ENCODE measurements at regions of chr16 and their contacts with region 1.

Region 1: DNA sequence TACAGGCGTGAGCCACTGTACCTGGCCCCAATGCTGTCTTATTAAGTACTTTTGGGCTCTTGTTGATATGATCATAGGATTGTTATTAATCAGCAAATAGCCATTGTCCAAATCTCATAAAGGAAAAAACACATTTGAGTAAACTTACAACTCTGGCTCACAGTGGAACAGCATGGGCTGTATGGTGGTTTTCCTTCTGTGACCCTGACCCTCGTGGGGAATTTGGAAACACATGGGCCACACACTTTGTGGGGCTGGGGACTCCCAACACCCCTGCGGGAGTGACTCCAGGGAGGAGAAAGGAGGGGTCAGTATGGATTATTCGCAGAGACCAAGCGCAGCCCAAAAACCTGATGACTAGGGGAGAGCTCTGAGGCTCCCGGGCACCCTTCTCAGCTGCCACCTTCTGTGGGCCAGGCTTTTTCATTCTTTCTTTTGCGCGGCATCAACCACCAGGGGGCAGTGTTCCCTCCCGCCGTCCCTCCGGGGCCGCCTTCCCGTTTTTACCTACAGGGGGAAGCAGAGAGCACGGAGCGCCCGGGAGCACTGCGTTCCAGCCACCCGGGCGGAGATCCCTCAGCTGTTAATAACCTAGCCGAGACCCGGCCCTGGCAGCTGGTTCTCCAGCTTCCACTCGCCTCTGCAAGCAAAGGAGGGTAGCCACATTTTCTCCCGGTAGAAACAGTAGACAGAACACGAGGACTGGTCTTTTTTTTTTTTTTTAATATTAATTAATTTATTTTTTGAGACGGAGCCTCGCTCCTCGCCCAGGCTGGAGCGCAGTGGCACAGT is 9.7 kb downstream of the TSNAXIP1 start:
- DNase-seq: peak; percentile 70
- H3K4me3 ChIP-seq: no peak overlapping the region
- H3K27ac ChIP-seq: no peak overlapping the region
- H3K4me1 ChIP-seq: no peaks in the 10 kb centered on the region
- H3K27me3 ChIP-seq: no peaks in the 10 kb centered on the region
- CTCF ChIP-seq: peak; percentile 100
- POLR2A ChIP-seq: no peak

Region 2: DNA sequence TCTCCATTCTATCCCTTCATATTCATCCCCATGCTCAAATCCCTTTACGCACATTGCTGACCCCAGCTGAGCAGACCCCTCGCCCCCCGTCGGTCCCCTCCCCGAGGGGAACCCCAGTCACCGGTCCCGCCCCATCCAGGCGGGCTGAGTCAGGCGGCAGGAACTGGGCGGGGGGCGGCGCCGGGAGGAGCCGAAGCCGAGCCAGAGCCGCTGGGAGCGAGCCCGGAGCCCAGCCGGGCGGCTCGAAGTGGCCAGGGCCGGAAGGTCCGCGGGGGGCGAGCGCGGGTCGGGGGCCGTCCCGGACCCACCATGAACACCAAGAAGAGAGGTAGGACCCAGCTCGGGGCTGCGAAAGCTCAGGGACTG is 279.2 kb before region 1 on chr16:
- CTCF ChIA-PET with region 1: no interaction called
- POLR2A ChIA-PET with region 1: no interaction called
- dilution Hi-C with region 1: no loop called
- intact Hi-C with region 1: no loop called
- DNase-seq: peak; percentile 79
- H3K4me3 ChIP-seq: peak overlapping the region; percentile 73 to 89 (median 88)
- H3K27ac ChIP-seq: peak overlapping the region; percentile 93
- H3K4me1 ChIP-seq: peaks cover 24% of the 10 kb centered on the region
- H3K27me3 ChIP-seq: no peaks in the 10 kb centered on the region
- CTCF ChIP-seq: no peak
- POLR2A ChIP-seq: peak; percentile 80

Region 3: DNA sequence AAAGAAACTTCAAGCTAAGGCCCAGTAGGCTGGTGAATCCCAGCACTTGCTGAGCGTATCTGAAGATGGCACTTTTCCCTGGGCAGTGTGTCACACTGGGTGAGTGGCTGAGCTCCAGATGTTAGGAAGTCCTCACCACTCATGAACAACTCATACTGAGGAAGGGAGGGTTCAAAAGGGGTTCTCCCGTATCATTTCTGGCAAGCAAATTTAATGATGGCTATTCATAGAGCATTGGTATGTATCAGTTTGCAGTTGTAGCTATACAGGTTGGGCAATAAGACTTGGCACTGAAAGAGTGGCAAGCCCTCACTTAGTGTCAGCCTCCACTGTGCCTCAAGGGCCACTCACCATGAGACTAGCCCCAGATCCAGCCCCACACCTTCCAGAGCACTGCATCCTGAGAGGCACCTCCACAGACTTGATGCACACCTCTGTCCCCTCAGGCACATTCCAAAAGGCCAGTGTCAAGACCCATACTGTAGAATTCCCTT is 108.0 kb before region 1 on chr16:
- CTCF ChIA-PET with region 1: no interaction called
- POLR2A ChIA-PET with region 1: no interaction called
- dilution Hi-C with region 1: no loop called
- intact Hi-C with region 1: no loop called
- DNase-seq: no peak
- H3K4me3 ChIP-seq: no peak overlapping the region
- H3K27ac ChIP-seq: no peak overlapping the region
- H3K4me1 ChIP-seq: no peaks in the 10 kb centered on the region
- H3K27me3 ChIP-seq: no peaks in the 10 kb centered on the region
- CTCF ChIP-seq: no peak
- POLR2A ChIP-seq: no peak

Region 4: GRCh38 chr16:67719048-67719777 is 97.2 kb before region 1 on chr16 and contains the start of gene GFOD2:
- CTCF ChIA-PET with region 1: interaction called, 17 read pairs
- POLR2A ChIA-PET with region 1: interaction called, 8 read pairs
- dilution Hi-C with region 1: no loop called
- intact Hi-C with region 1: no loop called
- DNase-seq: peak; percentile 98
- H3K4me3 ChIP-seq: peak within 1 kb of the TSS; percentile 78 to 93 (median 91)
- H3K27ac ChIP-seq: peak within 1 kb of the TSS; percentile 81
- H3K4me1 ChIP-seq: peaks cover 23% of the 10 kb centered on the region
- H3K27me3 ChIP-seq: no peaks in the 10 kb centered on the region
- CTCF ChIP-seq: no peak
- POLR2A ChIP-seq: peak; percentile 97
- total RNA-seq, gene GFOD2: 43.7 and 47.5 TPM in 2 replicates

Region 5: GRCh38 chr16:67833418-67834241 is 17.2 kb after region 1 on chr16:
- CTCF ChIA-PET with region 1: interaction called, 35 read pairs
- POLR2A ChIA-PET with region 1: interaction called, 3 read pairs
- dilution Hi-C with region 1: no loop called
- intact Hi-C with region 1: no loop called
- DNase-seq: peak; percentile 94
- H3K4me3 ChIP-seq: peak overlapping the region; percentile 33 to 69 (median 68)
- H3K27ac ChIP-seq: peak overlapping the region; percentile 29
- H3K4me1 ChIP-seq: peaks cover 7% of the 10 kb centered on the region
- H3K27me3 ChIP-seq: no peaks in the 10 kb centered on the region
- CTCF ChIP-seq: no peak
- POLR2A ChIP-seq: peak; percentile 91

Region 6: DNA sequence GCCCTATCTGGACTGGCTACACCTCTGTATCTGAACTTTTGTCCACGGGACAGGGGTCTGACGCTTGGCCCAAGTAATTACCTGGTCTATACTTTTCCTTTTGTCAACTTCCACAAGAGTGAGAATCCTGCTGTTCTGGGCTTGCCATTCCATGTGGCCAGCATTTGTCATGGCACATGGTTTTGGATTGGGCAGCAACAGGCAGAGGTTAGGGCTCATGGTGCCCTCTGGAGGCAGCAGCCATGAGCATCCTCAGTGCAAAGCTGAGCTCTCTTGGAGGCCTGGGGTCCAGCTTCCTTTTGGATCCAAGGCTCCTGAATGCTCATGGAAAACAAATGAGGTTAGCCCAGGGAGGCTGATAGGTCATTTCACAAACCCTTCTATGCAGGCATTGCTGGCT is 48.9 kb after region 1 on chr16:
- CTCF ChIA-PET with region 1: interaction called, 64 read pairs
- POLR2A ChIA-PET with region 1: no interaction called
- dilution Hi-C with region 1: no loop called
- intact Hi-C with region 1: loop called (anchors 1 kb)
- DNase-seq: peak; percentile 40
- H3K4me3 ChIP-seq: no peak overlapping the region
- H3K27ac ChIP-seq: no peak overlapping the region
- H3K4me1 ChIP-seq: no peaks in the 10 kb centered on the region
- H3K27me3 ChIP-seq: no peaks in the 10 kb centered on the region
- CTCF ChIP-seq: peak; percentile 30 to 57
- POLR2A ChIP-seq: no peak

Region 7: DNA sequence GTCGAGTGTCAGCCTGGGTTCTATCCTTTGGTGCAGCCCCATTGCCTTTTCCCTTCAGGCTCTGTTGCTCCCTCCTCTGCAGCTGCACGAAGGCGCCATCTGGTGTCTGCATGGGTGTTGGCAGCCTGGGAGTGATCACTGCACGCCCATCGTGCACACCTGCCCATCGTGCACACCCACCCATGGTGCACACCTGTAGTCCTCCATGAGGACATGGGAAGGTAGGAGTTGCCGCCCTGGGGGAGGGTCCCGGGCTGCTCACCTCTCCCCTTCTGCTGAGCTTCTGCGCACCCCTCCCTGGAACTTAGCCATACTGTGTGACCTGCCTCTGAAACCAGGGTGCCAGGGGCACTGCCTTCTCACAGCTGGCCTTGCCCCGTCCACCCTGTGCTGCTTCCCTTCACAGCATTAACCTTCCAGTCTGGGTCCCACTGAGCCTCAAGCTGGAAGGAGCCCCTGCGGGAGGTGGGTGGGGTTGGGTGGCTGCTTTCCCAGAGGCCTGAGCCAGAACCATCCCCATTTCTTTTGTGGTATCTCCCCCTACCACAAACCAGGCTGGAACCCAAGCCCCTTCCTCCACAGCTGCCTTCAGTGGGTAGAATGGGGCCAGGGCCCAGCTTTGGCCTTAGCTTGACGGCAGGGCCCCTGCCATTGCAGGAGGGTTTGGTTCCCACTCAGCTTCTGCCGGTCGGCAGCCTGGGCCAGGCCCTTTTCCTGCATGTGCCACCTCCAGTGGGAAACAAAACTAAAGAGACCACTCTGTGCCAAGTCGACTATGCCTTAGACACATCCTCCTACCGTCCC is 112.3 kb after region 1 on chr16:
- CTCF ChIA-PET with region 1: interaction called, 51 read pairs
- POLR2A ChIA-PET with region 1: no interaction called
- dilution Hi-C with region 1: no loop called
- intact Hi-C with region 1: loop called (anchors 1 kb)
- DNase-seq: peak; percentile 50
- H3K4me3 ChIP-seq: no peak overlapping the region
- H3K27ac ChIP-seq: no peak overlapping the region
- H3K4me1 ChIP-seq: peaks cover 10% of the 10 kb centered on the region
- H3K27me3 ChIP-seq: no peaks in the 10 kb centered on the region
- CTCF ChIP-seq: peak; percentile 87 to 93
- POLR2A ChIP-seq: no peak

Region 8: DNA sequence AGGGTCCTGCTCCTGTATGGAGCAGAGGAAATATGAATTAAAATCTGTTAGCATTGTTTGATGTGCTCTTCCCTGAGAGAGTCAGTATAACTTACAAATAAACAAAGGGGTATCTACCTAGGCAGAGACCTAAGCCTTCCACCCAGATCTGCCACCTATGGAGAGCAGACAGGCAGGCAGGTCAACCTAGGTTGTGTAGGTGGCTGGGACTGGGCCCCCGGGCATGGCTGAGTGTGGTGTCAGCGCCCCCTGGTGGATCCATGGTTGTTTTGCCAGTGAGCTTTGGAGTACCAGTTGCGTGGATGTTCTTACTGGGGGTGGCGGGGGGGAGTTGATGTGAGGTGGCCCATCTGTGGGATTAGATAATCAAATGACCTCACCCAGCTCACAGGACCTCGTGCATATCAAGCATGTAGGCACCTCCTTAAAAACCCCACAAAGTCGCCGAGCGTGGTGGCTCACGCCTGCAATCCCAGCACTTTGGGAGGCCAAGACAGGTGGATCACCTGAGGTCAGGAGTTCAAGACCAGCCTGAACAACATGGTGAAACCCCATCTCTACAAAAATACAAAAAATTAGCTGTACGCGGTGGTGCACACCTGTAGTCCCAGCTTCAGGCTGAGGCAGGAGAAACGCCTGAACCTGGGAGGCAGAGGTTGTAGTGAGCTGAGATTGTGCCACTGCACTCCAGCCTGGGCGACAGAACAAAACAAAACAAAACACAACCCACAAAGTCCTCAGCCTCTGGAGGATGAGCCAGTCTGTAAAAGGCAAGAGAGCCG is 224.3 kb after region 1 on chr16:
- CTCF ChIA-PET with region 1: interaction called, 22 read pairs
- POLR2A ChIA-PET with region 1: no interaction called
- dilution Hi-C with region 1: no loop called
- intact Hi-C with region 1: no loop called
- DNase-seq: peak; percentile 75
- H3K4me3 ChIP-seq: no peak overlapping the region
- H3K27ac ChIP-seq: no peak overlapping the region
- H3K4me1 ChIP-seq: no peaks in the 10 kb centered on the region
- H3K27me3 ChIP-seq: no peaks in the 10 kb centered on the region
- CTCF ChIP-seq: peak; percentile 79 to 88
- POLR2A ChIP-seq: no peak